AG04449 (cell line): ENCODE measurements at regions of chr16 and their contacts with region 1.

Region 1: DNA sequence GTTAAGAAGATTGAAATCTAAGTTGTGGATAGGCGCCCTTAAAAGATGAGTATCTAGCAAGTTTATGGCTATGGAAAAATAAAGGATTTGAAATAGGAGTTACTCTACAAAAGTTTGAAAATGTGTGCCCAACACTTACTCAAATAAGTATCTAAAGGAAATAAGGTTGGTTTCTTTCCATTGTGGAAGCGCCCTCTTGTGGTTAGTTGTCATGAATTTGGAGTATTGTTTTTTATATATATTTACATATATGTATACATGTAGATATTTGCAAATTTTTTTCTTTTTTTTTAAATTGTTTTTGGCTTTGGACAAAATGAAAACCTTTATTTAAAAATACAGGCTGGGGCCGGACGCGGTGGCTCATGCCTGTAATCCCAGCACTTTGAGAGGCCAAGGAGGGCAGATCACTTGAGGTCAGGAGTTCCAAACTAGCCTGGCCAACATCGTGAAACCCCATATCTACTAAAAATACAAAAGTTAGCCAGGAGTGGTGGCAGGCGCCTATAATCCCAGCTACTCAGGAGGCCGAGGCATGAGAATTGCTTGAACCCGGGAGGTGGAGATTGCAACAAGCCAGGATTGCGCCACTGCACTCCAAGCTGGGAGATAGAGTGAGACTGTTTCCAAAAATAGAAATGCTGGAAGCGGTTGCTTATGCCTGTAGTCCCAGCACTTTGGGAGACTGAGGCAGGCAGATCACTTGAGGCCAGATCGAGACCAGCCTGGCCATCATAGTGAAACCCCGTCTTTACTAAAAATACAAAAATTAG is 24.0 kb upstream of the VPS4A start:
- DNase-seq: no peak
- H3K4me3 ChIP-seq: no peak overlapping the region
- CTCF ChIP-seq: peak; percentile 13

Region 2: GRCh38 chr16:69132424-69133252 is 154.5 kb before region 1 on chr16 and contains the starts of genes CHTF8 and UTP4:
- CTCF ChIA-PET with region 1: interaction called, 10 read pairs
- POLR2A ChIA-PET with region 1: no interaction called
- DNase-seq: no peak
- H3K4me3 ChIP-seq: peak within 1 kb of the TSS; percentile 99
- CTCF ChIP-seq: no peak

Region 3: GRCh38 chr16:69157196-69157595 is 129.9 kb before region 1 on chr16:
- CTCF ChIA-PET with region 1: interaction called, 201 read pairs
- POLR2A ChIA-PET with region 1: no interaction called
- DNase-seq: no peak
- H3K4me3 ChIP-seq: no peak overlapping the region
- CTCF ChIP-seq: no peak

Region 4: DNA sequence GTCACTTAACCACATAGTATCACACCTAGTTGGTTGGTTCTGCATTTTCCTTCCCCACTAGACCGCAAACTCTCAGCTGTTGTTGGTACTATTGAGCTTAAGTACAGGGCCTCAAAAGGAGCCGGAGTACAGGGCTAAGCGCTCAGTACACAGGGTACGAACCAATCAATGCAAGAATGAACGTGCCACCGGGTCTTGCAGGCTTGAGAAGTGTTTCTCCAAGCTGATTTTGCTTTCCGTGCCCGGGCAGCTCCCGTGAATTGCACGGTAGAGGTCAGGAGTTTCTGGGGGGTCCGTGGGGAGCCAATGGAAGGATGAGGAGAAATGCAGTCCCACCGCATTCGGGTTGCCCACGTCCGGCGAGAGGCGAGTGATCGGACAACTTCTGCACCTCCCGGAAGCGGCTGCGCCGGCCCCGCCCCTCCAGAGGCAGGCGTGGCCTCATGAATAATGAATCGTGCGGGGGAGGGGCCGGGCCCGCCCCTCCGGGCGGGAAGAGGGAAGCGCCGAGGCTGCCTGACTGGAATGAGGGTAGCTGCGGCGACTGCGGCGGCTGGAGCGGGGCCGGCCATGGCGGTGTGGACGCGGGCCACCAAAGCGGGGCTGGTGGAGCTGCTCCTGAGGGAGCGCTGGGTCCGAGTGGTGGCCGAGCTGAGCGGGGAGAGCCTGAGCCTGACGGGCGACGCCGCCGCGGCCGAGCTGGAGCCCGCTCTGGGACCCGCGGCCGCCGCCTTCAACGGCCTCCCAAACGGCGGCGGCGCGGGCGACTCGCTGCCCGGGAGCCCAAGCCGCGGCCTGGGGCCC is 100.3 kb before region 1 on chr16 and contains the start of gene SNTB2:
- CTCF ChIA-PET with region 1: interaction called, 25 read pairs
- POLR2A ChIA-PET with region 1: no interaction called
- DNase-seq: no peak
- H3K4me3 ChIP-seq: peak within 1 kb of the TSS; percentile 76
- CTCF ChIP-seq: no peak

Region 5: GRCh38 chr16:69301861-69302260 is 14.7 kb after region 1 on chr16:
- CTCF ChIA-PET with region 1: interaction called, 10 read pairs
- POLR2A ChIA-PET with region 1: no interaction called
- DNase-seq: no peak
- H3K4me3 ChIP-seq: no peak overlapping the region
- CTCF ChIP-seq: no peak

Region 6: DNA sequence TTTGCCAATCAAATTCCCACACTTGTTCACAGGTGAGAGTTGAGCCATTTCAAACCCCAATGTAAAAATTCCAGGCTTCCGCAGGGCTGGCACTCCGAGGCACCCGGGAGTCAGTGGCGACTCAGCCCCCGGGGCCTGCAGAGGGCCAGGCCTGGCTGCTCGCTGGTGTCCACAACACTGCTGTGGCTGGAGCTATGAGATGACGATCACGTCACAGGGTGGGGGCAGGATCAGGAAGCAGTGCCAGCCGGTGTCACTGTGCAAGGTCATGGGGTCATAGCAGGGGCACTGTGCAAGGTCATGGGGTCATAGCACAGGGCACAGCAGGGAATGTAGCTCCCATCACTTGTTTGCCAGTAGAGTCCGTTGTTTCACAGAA is 31.8 kb after region 1 on chr16:
- CTCF ChIA-PET with region 1: no interaction called
- POLR2A ChIA-PET with region 1: no interaction called
- DNase-seq: no peak
- H3K4me3 ChIP-seq: no peak overlapping the region
- CTCF ChIP-seq: no peak

Region 7: DNA sequence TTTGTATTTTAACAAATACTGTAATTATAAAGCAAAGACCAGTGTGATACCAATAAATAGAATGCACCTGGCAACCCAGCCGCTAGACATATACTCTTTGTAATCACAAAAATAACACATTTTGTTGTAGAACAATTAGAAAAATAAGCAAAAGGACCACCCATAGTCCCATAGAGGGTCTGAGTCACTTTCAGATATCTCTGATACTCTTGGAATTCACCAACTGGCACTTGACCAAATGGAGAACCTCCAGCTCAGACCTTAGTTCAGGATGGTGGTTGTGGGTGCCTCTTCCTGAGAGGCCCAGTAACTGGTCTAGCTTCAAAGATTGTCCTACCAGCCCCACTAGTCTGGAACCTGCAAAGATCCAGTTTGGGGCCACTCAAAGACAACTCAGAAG is 99.5 kb after region 1 on chr16:
- CTCF ChIA-PET with region 1: no interaction called
- POLR2A ChIA-PET with region 1: no interaction called
- DNase-seq: no peak
- H3K4me3 ChIP-seq: no peak overlapping the region
- CTCF ChIP-seq: no peak